Common myeloid progenitor, CD34-positive (primary cell): ENCODE measurements at regions of chr19 and their contacts with region 1.

Region 1: DNA sequence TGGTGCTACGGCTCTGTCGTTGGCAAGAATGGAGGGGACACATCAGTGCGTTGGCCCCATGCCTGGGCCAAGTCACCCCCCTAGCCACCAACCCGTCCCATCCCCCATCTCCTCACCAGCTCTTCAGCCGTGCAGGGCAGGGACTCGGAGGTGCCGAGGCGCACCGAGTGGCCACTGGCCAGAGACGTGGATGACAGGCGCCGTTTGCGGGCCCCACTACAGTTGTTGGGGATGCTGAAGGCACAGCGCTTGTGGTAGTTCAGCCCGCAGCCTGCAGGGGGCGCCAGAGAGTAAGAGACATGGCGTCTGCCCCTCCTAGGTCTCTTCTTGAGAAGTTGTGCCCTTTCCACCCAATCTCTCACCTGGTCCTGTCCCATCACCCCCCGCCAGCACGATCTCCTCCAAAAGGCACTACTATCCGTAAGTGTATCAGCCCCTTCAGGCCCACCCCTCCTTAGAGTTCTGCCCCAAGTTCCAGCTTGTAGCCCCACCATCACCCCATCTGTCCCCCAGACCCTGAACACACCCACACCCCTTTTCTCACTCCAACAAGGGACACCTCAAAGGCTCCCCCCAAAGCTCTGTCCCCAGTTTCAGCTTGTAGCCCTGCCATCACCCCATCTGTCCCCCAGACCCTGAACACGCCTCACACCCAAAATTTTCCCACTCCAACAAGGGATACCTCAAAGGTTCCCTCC is 12.4 kb downstream of the PRKD2 start:
- DNase-seq: peak; percentile 50 to 74 (median 66)
- H3K4me3 ChIP-seq: no peak overlapping the region
- H3K27ac ChIP-seq: no peak overlapping the region
- H3K4me1 ChIP-seq: peaks cover 0 to 1% (median 0%) of the 10 kb centered on the region in 4 experiments
- H3K27me3 ChIP-seq: no peaks in the 10 kb centered on the region

Region 2: DNA sequence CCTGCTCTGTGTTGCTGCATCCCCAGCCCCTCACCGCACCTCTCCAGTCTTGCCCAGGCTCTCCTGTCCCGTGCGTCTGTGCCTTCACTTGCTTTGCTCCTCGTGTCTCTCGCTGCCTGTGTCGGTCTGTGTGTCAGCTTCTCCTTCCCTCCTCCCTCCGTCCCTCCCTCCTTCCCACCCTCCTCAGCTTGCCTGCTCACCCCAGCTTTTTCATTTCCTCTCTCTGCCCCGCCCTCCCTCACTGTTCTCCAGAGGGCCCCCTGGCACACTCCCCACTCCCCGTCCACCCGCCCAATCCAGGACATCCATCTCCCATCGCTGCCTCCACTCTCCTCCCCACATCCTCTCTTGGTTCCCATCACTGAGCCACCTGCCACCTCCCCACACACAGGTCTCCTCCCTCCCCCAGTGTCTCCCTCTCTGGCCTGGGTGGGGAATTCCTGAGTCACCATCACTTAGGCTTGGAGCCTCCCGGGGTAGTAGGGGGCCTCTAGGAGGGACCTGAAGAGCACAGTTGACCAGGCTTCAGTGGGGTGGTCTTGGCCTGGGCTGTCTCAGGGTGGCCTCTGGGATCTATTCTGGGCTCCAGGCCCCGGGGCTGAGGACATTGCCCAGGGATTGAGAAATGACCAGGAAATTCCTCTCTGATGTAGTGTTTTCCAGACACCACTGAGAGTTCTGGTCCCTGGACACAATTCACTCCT is 79.4 kb before region 1 on chr19 and contains the start of gene PTGIR:
- CTCF ChIA-PET with region 1: no interaction called
- POLR2A ChIA-PET with region 1: no interaction called
- DNase-seq: peak in 2 of 3 donors; percentile 62 to 67
- H3K4me3 ChIP-seq: peak within 1 kb of the TSS in 4 of 7 experiments; percentile 9 to 44 (median 35)
- H3K27ac ChIP-seq: no peak within 1 kb of the TSS
- H3K4me1 ChIP-seq: peaks cover 3 to 75% (median 62%) of the 10 kb centered on the region in 4 experiments
- H3K27me3 ChIP-seq: no peaks in the 10 kb centered on the region

Region 3: DNA sequence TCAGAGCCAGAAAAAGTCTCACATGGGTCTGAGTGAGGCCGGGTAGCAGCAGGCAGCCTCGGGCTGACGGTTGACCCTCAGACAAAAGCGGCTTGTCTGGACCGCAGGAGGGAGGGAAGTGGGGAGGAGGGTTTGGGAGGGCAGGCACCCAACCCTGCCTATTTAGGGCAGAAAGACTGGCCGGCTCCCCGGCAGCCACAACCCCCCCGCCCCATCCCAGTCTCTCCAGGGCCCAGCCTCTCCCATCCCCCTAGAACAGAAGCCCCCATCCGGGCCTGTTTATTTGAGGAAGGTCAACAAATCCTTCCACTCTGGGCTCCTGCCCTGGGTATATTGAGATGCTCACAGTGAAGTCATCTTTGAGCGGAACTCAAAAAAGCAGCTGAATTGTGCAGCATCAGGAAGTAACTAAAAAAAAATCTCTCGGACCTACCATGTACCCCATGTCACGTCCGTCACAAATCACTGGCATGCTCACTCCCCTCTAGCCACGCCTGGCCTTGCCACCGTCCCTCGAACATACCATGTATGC is 49.8 kb before region 1 on chr19:
- CTCF ChIA-PET with region 1: no interaction called
- POLR2A ChIA-PET with region 1: no interaction called
- DNase-seq: no peak
- H3K4me3 ChIP-seq: no peak overlapping the region
- H3K27ac ChIP-seq: no peak overlapping the region
- H3K4me1 ChIP-seq: peaks cover 0 to 19% (median 10%) of the 10 kb centered on the region in 4 experiments
- H3K27me3 ChIP-seq: peaks cover 0 to 47% (median 15%) of the 10 kb centered on the region in 5 experiments

Region 4: GRCh38 chr19:46689358-46689757 is 15.2 kb before region 1 on chr19:
- CTCF ChIA-PET with region 1: interaction called, 16 read pairs
- POLR2A ChIA-PET with region 1: interaction called, 3 read pairs
- DNase-seq: no peak
- H3K4me3 ChIP-seq: no peak overlapping the region
- H3K27ac ChIP-seq: no peak overlapping the region
- H3K4me1 ChIP-seq: no peaks in the 10 kb centered on the region
- H3K27me3 ChIP-seq: no peaks in the 10 kb centered on the region

Region 5: GRCh38 chr19:46717034-46717723 is 12.7 kb after region 1 on chr19 and contains the start of gene PRKD2:
- CTCF ChIA-PET with region 1: interaction called, 356 read pairs
- POLR2A ChIA-PET with region 1: interaction called, 4 read pairs
- DNase-seq: peak; percentile 74 to 84 (median 81)
- H3K4me3 ChIP-seq: peak within 1 kb of the TSS; percentile 67 to 96 (median 84)
- H3K27ac ChIP-seq: peak within 1 kb of the TSS; percentile 64 to 89
- H3K4me1 ChIP-seq: peaks cover 17 to 82% (median 68%) of the 10 kb centered on the region in 4 experiments
- H3K27me3 ChIP-seq: no peaks in the 10 kb centered on the region

Region 6: GRCh38 chr19:46746281-46747013 is 41.9 kb after region 1 on chr19 and contains the start of gene STRN4:
- CTCF ChIA-PET with region 1: interaction called, 24 read pairs
- POLR2A ChIA-PET with region 1: no interaction called
- DNase-seq: peak; percentile 50 to 73 (median 62)
- H3K4me3 ChIP-seq: peak within 1 kb of the TSS; percentile 58 to 93 (median 89)
- H3K27ac ChIP-seq: peak within 1 kb of the TSS; percentile 54 to 89
- H3K4me1 ChIP-seq: peaks cover 0 to 26% (median 18%) of the 10 kb centered on the region in 4 experiments
- H3K27me3 ChIP-seq: no peaks in the 10 kb centered on the region

Region 7: GRCh38 chr19:46753420-46754155 is 49.1 kb after region 1 on chr19:
- CTCF ChIA-PET with region 1: interaction called, 24 read pairs
- POLR2A ChIA-PET with region 1: interaction called, 3 read pairs
- DNase-seq: peak; percentile 53 to 80 (median 79)
- H3K4me3 ChIP-seq: no peak overlapping the region
- H3K27ac ChIP-seq: no peak overlapping the region
- H3K4me1 ChIP-seq: peaks cover 0 to 15% (median 8%) of the 10 kb centered on the region in 4 experiments
- H3K27me3 ChIP-seq: no peaks in the 10 kb centered on the region